Posterior cingulate gyrus (tissue), 11 donors: ENCODE measurements at regions of chrX and their contacts with region 1.

Region 1: DNA sequence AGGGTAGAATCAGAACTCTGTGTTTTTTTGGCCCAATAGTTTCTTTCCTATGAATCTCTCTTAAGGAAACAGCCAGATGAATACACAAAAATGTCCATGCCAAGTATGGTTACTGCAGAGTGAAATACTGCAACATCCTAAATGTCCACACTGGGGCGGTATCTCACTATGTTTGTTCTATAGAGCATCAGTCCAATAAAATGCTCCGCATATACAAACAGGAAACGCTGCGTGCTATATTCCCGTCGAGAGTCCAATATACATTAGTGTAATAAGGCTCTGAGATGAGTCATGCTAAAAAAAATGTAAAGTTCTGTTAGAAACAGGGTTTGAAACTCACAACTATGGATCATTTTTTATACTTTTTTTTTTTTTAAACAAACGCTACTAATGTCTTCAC is 72.9 kb upstream of the ENOX2 start:
- DNase-seq: peak in 3 of 10 donors; percentile 8 to 19 (median 9)

Region 2: DNA sequence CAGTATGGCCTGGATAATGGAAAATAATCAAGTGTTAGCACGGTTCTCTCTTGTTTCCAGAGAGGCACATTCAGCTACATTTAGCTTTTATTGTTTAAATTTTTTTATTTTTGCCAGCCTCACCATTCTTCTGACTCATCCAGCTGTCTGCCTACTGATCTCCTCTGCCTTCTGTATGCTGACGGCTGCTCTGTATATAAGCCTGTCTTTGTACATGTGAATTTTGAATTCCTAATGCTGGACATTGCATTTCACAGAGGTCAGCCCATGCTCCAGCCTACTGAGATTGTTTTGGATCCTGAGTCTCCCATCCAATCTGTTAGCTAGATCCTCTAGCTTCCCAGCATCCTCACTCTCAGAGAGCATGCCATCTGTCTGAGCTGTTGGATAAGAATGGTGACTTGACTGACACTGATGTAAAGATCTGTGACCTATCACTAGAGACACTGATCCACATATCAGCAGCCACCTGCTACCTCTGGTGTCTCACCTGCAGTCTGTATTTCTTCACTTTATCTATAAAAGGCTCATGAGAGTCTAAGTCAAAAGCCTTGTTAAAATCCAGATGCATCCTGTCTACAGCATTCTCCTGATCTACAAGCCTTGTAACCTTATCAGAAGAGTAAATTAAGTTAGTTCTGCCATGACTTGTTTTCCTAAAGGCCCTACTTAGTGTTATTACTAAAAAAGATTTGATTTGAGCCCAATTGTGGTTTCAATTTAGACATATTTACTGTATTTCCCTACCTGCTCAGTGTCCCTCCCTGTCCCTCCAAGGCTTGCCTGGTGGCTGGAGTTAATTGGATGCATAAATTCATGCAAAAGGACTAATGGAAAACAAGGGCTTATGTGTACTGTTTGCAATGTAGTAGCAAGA is 56.6 kb after region 1 on chrX:
- intact Hi-C with region 1: no loop called
- DNase-seq: no peak

Region 3: DNA sequence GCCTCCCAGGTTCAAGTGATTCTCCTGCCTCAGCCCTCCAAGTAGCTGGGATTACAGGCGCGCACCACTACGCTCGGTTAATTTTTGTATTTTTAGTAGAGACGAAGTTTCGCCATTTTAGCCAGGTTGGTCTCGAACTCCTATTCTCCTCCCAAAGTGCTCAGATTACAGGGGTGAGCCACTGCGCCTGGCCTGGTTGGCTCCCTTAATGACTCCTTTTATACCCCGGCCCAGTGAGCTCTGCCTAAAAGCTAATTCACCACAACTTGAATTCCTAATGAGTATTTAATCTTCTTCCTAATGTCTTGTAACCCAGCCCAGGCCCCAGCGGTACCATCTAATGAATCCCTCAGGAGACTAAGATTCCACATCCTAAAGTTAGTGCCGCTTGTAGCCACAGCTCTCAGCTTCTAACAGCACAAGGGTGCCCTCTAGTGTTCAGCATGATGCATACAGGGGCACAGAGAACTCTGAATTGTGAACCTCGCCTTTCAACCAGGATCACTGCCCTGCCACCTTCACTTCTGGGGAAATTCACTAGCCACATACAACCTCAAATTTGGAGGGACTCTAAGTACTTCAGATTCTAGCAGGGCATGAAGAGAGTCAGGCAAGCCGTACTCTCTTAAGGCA is 657.5 kb after region 1 on chrX:
- intact Hi-C with region 1: loop called (anchors 5 kb)
- DNase-seq: peak in 7 of 10 donors; percentile 11 to 85 (median 50)

Region 4: GRCh38 chrX:131677655-131678628 is 702.0 kb after region 1 on chrX:
- intact Hi-C with region 1: loop called (anchors 5 kb)
- DNase-seq: peak in 8 of 10 donors; percentile 7 to 88 (median 23)